PC-9 (cell line): ENCODE measurements at regions of chr16 and their contacts with region 1.

Region 1: GRCh38 chr16:29862884-29863668 is at the start of gene CDIPT:
- DNase-seq: peak; percentile 93 to 97
- H3K4me3 ChIP-seq: peak within 1 kb of the TSS; percentile 78
- H3K27ac ChIP-seq: peak within 1 kb of the TSS; percentile 81
- H3K4me1 ChIP-seq: peaks cover 10% of the 10 kb centered on the region
- H3K27me3 ChIP-seq: no peaks in the 10 kb centered on the region
- CTCF ChIP-seq: 0 out of 2 replicates have a peak, but pooled peaks have one; percentile 35
- total RNA-seq, gene CDIPT: 90.6 and 133 TPM in 2 replicates

Region 2: DNA sequence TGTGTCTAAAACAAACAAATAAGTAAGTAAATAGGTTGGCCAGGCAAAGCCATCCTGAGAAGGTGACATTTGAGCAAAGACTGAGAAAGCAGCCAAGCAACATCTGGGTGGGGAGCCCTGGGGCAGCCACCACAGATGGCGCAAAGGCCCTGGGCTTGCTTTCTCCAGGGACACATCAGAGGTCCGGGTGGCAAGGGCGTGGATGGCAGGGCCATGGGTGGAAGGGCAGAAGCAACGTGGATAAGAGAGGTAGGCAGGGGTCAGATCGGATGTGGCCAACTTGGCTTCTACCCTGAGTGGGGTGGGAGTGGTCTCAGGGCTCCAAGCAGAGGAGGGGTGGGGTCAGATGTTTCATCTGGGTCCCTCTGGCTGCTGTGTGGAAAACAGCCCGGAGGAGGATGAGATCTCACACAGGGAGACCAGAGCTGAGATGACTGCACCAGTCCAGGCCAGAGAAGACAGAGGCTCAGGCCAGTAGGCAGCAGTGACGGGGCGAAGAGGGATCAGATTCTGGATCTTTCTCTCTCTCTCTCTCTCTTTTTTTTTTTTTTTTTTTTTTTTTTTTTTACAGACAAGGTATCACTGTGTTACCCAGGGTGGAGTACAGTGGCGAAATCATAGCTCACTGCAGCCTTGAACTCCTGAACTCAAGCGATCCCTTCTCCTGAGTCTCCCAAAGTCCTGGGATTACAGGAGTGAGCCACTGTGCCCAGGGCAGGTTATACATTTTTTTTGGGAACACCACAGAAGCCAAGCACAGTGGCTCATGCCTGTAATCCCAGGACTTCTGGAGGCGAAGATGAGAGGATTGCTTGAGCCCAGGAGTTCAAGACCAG is 206.2 kb before region 1 on chr16:
- CTCF ChIA-PET with region 1: no interaction called
- POLR2A ChIA-PET with region 1: interaction called, 13 read pairs
- intact Hi-C with region 1: no loop called
- DNase-seq: no peak
- H3K4me3 ChIP-seq: no peak overlapping the region
- H3K27ac ChIP-seq: no peak overlapping the region
- H3K4me1 ChIP-seq: no peaks in the 10 kb centered on the region
- H3K27me3 ChIP-seq: no peaks in the 10 kb centered on the region
- CTCF ChIP-seq: no peak

Region 3: DNA sequence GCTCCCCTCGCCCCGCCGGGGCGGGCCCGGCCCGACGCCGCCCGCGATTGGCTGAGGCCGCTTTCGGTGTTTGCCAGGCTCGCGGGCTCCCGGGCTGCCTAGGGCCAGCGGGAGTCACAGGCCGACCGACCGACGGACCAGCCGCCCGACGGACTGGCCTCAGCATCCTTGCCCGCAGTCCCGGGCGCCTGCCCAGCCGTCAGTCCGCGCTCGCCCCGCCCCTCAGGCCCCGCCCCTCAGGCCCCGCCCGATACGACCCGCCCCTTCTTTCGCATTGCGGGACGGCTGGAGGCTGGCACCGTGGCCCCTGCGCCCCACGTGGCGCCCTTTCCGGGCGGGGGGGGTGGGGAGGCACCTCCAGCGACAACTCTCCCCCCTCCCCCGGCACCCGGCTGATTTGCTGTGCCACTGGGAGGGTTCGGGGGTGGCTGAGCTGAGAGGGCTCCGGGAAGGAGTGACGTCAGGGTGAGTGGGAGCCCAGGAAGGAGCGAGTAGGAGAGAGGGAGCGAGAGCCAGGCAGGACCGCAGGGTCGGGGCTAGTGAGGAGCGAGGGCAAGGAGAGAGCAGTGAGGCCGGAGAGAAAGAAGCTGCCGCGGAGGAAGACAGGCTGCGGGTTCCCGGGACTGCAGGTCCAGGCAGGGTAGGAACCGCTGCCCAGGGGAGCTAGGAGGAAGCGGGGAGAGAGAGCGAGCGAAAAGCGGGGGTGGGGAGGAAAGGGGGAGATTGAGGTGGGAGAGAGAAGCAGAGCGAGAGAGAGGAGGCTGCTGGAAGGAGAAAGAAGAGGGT is 37.2 kb after region 1 on chr16 and contains the start of gene ASPHD1:
- CTCF ChIA-PET with region 1: no interaction called
- POLR2A ChIA-PET with region 1: no interaction called
- intact Hi-C with region 1: loop called (anchors 5 kb)
- DNase-seq: peak; percentile 62 to 86
- H3K4me3 ChIP-seq: peak within 1 kb of the TSS; percentile 72
- H3K27ac ChIP-seq: peak within 1 kb of the TSS; percentile 51
- H3K4me1 ChIP-seq: peaks cover 16% of the 10 kb centered on the region; the same call in 1 of the 2 replicates
- H3K27me3 ChIP-seq: no peaks in the 10 kb centered on the region
- CTCF ChIP-seq: no peak
- total RNA-seq, gene ASPHD1: 8.3 and 11.3 TPM in 2 replicates

Region 4: GRCh38 chr16:29995911-29996772 is 133.1 kb after region 1 on chr16 and contains the start of gene INO80E:
- CTCF ChIA-PET with region 1: no interaction called
- POLR2A ChIA-PET with region 1: no interaction called
- intact Hi-C with region 1: loop called (anchors 2 kb)
- DNase-seq: peak; percentile 91 to 100
- H3K4me3 ChIP-seq: peak within 1 kb of the TSS; percentile 72
- H3K27ac ChIP-seq: peak within 1 kb of the TSS; percentile 74
- H3K4me1 ChIP-seq: peaks cover 25% of the 10 kb centered on the region
- H3K27me3 ChIP-seq: no peaks in the 10 kb centered on the region
- CTCF ChIP-seq: no peak
- total RNA-seq, gene INO80E: 102 TPM in 2 replicates

Region 5: DNA sequence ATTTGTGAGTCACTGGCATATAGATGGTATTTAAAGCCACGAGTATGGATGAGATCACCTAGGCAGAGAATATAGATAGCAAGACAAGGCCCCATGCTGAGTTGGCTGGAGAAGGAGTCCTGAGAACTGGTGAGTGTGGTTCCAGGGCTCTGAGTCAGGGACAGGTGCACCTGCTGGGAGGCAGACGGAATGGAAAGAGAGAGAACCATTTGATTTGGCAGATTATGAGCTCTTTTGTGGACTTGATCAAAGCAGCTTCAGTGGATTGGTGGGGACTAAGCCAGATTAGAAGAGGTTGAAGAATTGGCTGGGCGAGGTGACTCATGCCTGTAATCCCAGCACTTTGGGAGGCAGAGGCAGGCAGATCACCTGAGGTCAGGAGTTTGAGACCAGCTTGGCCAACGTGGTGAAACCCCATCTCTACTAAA is 155.7 kb after region 1 on chr16:
- CTCF ChIA-PET with region 1: interaction called, 3 read pairs
- POLR2A ChIA-PET with region 1: no interaction called
- intact Hi-C with region 1: loop called (anchors 2 kb)
- DNase-seq: peak in 1 of 2 experiments; percentile 89
- H3K4me3 ChIP-seq: no peak overlapping the region
- H3K27ac ChIP-seq: no peak overlapping the region
- H3K4me1 ChIP-seq: no peaks in the 10 kb centered on the region; the same call in 1 of the 2 replicates
- H3K27me3 ChIP-seq: peaks cover 8% of the 10 kb centered on the region; the same call in 1 of the 2 replicates
- CTCF ChIP-seq: no peak